Endothelial cell of umbilical vein (primary cell): ENCODE measurements at regions of chr14 and their contacts with region 1.

Region 1: GRCh38 chr14:24299255-24300195 is at the starts of genes DHRS1 and NOP9:
- DNase-seq: peak; percentile 90
- H3K4me3 ChIP-seq: peak within 1 kb of the TSS; percentile 79 to 85 (median 82)
- H3K27ac ChIP-seq: peak within 1 kb of the TSS; percentile 74
- H3K4me1 ChIP-seq: peaks cover 22% of the 10 kb centered on the region
- H3K27me3 ChIP-seq: no peaks in the 10 kb centered on the region
- CTCF ChIP-seq: no peak
- POLR2A ChIP-seq: peak; percentile 76
- total RNA-seq, gene DHRS1: 18.0 and 20.0 TPM in 2 replicates
- total RNA-seq, gene NOP9: 30.9 and 31.0 TPM in 2 replicates

Region 2: GRCh38 chr14:24058260-24058950 is 241.1 kb before region 1 on chr14:
- CTCF ChIA-PET with region 1: interaction called, 46 read pairs
- POLR2A ChIA-PET with region 1: no interaction called
- dilution Hi-C with region 1: no loop called
- intact Hi-C with region 1: loop called (anchors 1 kb)
- DNase-seq: peak; percentile 44
- H3K4me3 ChIP-seq: no peak overlapping the region
- H3K27ac ChIP-seq: no peak overlapping the region
- H3K4me1 ChIP-seq: no peaks in the 10 kb centered on the region
- H3K27me3 ChIP-seq: no peaks in the 10 kb centered on the region
- CTCF ChIP-seq: peak; percentile 62 to 64
- POLR2A ChIP-seq: no peak

Region 3: GRCh38 chr14:24123508-24124417 is 175.8 kb before region 1 on chr14:
- CTCF ChIA-PET with region 1: no interaction called
- POLR2A ChIA-PET with region 1: no interaction called
- dilution Hi-C with region 1: no loop called
- intact Hi-C with region 1: no loop called
- DNase-seq: no peak
- H3K4me3 ChIP-seq: no peak overlapping the region
- H3K27ac ChIP-seq: no peak overlapping the region
- H3K4me1 ChIP-seq: no peaks in the 10 kb centered on the region
- H3K27me3 ChIP-seq: no peaks in the 10 kb centered on the region
- CTCF ChIP-seq: no peak
- POLR2A ChIP-seq: no peak

Region 4: GRCh38 chr14:24160850-24161804 is 138.4 kb before region 1 on chr14 and contains the start of gene IRF9:
- CTCF ChIA-PET with region 1: interaction called, 15 read pairs
- POLR2A ChIA-PET with region 1: no interaction called
- dilution Hi-C with region 1: no loop called
- intact Hi-C with region 1: loop called (anchors 2 kb)
- DNase-seq: peak; percentile 97
- H3K4me3 ChIP-seq: peak within 1 kb of the TSS; percentile 37 to 79 (median 67)
- H3K27ac ChIP-seq: peak within 1 kb of the TSS; percentile 78
- H3K4me1 ChIP-seq: peaks cover 16% of the 10 kb centered on the region
- H3K27me3 ChIP-seq: no peaks in the 10 kb centered on the region
- CTCF ChIP-seq: peak; percentile 95 to 97
- POLR2A ChIP-seq: peak; percentile 88
- total RNA-seq, gene IRF9: 33.2 and 46.1 TPM in 2 replicates

Region 5: GRCh38 chr14:24215495-24216344 is 83.8 kb before region 1 on chr14 and contains the start of gene MDP1:
- CTCF ChIA-PET with region 1: interaction called, 61 read pairs
- POLR2A ChIA-PET with region 1: interaction called, 3 read pairs
- dilution Hi-C with region 1: no loop called
- intact Hi-C with region 1: loop called (anchors 1 kb)
- DNase-seq: peak; percentile 91
- H3K4me3 ChIP-seq: peak within 1 kb of the TSS; percentile 57 to 69 (median 64)
- H3K27ac ChIP-seq: peak within 1 kb of the TSS; percentile 61
- H3K4me1 ChIP-seq: peaks cover 11% of the 10 kb centered on the region
- H3K27me3 ChIP-seq: no peaks in the 10 kb centered on the region
- CTCF ChIP-seq: peak; percentile 84 to 86
- POLR2A ChIP-seq: peak; percentile 88
- total RNA-seq, gene MDP1: 8.1 and 9.9 TPM in 2 replicates

Region 6: DNA sequence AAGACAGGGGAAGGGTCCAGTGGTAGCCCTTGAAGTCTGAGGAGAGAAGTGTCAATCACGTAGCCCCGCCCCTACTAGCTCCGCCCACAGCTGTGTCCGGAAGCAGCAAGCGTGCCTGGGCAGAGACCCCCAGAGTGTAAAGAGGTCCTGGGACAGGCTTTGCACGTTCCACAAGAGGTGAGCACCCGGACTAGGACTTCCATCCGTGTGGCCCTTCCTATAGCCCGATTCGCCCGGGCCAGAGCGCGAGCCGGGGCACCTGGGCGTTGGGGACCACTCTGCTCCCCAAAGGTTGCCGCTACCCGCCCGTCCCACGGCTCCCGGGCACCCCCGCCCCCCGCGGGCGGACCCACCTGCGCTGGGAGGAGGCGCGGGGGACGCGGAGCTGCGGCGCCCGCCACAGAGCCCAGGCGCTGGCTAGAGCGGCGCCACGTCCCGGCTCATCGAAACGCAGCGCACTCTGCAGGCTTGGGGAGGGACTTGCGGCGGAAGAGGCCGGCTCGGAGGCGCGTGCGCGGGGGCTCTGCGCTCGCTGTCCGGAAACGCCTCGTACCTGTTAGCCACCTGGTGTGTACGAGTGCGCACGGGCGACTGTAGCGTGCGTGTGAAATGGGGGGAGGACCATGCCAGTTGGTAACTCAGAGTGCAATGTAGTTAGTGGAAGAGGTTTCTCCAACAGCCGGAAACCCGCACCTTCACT is 28.2 kb before region 1 on chr14 and contains the start of gene RABGGTA:
- CTCF ChIA-PET with region 1: interaction called, 28 read pairs
- POLR2A ChIA-PET with region 1: no interaction called
- dilution Hi-C with region 1: no loop called
- intact Hi-C with region 1: loop called (anchors 1 kb)
- DNase-seq: peak; percentile 79
- H3K4me3 ChIP-seq: peak within 1 kb of the TSS; percentile 58 to 77 (median 65)
- H3K27ac ChIP-seq: peak within 1 kb of the TSS; percentile 92
- H3K4me1 ChIP-seq: peaks cover 9% of the 10 kb centered on the region
- H3K27me3 ChIP-seq: no peaks in the 10 kb centered on the region
- CTCF ChIP-seq: peak; percentile 74 to 85
- POLR2A ChIP-seq: peak; percentile 81
- total RNA-seq, gene RABGGTA: 29.3 and 29.5 TPM in 2 replicates

Region 7: DNA sequence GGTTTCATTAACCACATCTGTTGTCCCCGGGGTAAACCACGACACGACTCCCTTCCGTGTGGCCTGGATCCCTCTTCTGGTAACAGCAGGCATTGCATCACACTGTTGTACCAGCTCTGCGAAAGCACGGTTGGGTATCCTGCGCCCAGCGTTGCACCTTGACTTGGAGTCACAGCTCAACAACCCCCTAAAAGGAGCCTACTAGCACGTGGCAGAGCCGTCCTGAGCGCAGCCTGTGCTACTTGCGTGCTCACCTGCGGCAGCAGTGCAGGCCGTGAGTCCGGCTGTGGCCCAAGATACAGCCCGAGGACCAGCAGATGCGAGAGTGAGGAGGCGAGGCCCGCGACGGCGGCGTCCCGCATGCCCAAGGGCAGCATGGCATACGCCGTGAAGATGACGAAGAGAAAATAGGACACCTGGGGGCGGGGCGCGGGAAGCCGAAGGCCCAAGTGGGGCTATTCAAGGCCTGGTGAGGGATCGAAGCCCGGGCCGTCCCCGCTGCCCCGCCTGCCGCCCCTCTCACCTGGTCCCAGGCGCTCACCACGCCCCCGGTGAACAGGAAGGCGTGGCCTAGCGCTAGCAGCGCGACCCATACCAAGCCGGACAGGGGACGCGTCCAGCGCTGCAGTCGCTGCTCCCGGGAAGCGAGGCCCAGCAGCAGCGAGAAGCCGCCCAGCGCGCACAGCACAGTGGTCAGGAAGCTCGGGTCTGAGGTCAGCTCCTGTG is 32.9 kb after region 1 on chr14:
- CTCF ChIA-PET with region 1: interaction called, 47 read pairs
- POLR2A ChIA-PET with region 1: no interaction called
- dilution Hi-C with region 1: no loop called
- intact Hi-C with region 1: no loop called
- DNase-seq: peak; percentile 45
- H3K4me3 ChIP-seq: no peak overlapping the region
- H3K27ac ChIP-seq: no peak overlapping the region
- H3K4me1 ChIP-seq: peaks cover 29% of the 10 kb centered on the region
- H3K27me3 ChIP-seq: no peaks in the 10 kb centered on the region
- CTCF ChIP-seq: peak; percentile 55 to 72
- POLR2A ChIP-seq: no peak

Region 8: DNA sequence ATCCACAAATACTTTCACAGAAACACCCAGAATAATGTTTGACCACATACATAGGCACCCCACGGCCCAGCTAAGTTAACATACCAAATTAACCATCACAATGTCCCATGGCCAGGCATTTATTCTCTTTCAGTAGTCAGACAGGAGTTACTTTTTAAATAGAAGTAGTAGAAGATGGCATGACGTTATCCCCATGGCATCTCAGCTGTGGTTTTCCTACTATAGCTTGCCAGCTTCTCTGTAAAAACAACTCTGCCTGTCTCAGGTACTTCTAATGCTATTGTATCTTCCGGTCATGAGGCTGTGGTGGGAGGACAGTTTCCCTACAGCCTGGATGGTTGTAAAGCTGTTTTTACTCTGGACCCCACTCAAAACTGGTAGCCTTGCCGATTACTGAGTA is 257.2 kb after region 1 on chr14:
- CTCF ChIA-PET with region 1: no interaction called
- POLR2A ChIA-PET with region 1: no interaction called
- dilution Hi-C with region 1: no loop called
- intact Hi-C with region 1: no loop called
- DNase-seq: no peak
- H3K4me3 ChIP-seq: no peak overlapping the region
- H3K27ac ChIP-seq: no peak overlapping the region
- H3K4me1 ChIP-seq: no peaks in the 10 kb centered on the region
- H3K27me3 ChIP-seq: no peaks in the 10 kb centered on the region
- CTCF ChIP-seq: no peak
- POLR2A ChIP-seq: no peak